Naive thymus-derived CD4-positive, alpha-beta T cell (primary cell): ENCODE measurements at regions of chr22 and their contacts with region 1.

Region 1: GRCh38 chr22:41381329-41382097 is at the start of gene TEF:
- DNase-seq: peak; percentile 97 to 99 (median 98)
- ATAC-seq: peak; percentile 89
- H3K4me3 ChIP-seq: peak within 1 kb of the TSS; percentile 86
- H3K4me3 Mint-ChIP-seq: peak within 1 kb of the TSS; percentile 90 to 97 (median 94)
- H3K27ac ChIP-seq: peak within 1 kb of the TSS; percentile 95
- H3K27ac Mint-ChIP-seq: peak within 1 kb of the TSS; percentile 94 to 99 (median 98)
- H3K4me1 ChIP-seq: peaks cover 5 to 14% of the 10 kb centered on the region in 2 donors
- H3K4me1 Mint-ChIP-seq: peaks cover 5 to 29% (median 19%) of the 10 kb centered on the region in 7 donors
- H3K27me3 ChIP-seq: no peaks in the 10 kb centered on the region
- H3K27me3 Mint-ChIP-seq: peaks cover 0 to 5% (median 0%) of the 10 kb centered on the region in 5 donors
- total RNA-seq, gene TEF: 3.8 to 8.4 (median 6.2) TPM

Region 2: GRCh38 chr22:40950962-40951794 is 430.3 kb before region 1 on chr22 and contains the start of gene RBX1:
- CTCF ChIA-PET with region 1: no interaction called
- POLR2A ChIA-PET with region 1: interaction called, 8 read pairs
- intact Hi-C with region 1: loop called (anchors 1 kb)
- DNase-seq: peak; percentile 96 to 100 (median 99)
- ATAC-seq: peak; percentile 92
- H3K4me3 ChIP-seq: peak within 1 kb of the TSS; percentile 98
- H3K4me3 Mint-ChIP-seq: peak within 1 kb of the TSS; percentile 91 to 99 (median 98)
- H3K27ac ChIP-seq: peak within 1 kb of the TSS; percentile 99
- H3K27ac Mint-ChIP-seq: peak within 1 kb of the TSS; percentile 96 to 100 (median 99)
- H3K4me1 ChIP-seq: peaks cover 16 to 19% of the 10 kb centered on the region in 2 donors
- H3K4me1 Mint-ChIP-seq: peaks cover 20 to 43% (median 39%) of the 10 kb centered on the region in 7 donors
- H3K27me3 ChIP-seq: no peaks in the 10 kb centered on the region
- H3K27me3 Mint-ChIP-seq: no peaks in the 10 kb centered on the region
- total RNA-seq, gene RBX1: 28.9 to 91.3 (median 32.7) TPM

Region 3: DNA sequence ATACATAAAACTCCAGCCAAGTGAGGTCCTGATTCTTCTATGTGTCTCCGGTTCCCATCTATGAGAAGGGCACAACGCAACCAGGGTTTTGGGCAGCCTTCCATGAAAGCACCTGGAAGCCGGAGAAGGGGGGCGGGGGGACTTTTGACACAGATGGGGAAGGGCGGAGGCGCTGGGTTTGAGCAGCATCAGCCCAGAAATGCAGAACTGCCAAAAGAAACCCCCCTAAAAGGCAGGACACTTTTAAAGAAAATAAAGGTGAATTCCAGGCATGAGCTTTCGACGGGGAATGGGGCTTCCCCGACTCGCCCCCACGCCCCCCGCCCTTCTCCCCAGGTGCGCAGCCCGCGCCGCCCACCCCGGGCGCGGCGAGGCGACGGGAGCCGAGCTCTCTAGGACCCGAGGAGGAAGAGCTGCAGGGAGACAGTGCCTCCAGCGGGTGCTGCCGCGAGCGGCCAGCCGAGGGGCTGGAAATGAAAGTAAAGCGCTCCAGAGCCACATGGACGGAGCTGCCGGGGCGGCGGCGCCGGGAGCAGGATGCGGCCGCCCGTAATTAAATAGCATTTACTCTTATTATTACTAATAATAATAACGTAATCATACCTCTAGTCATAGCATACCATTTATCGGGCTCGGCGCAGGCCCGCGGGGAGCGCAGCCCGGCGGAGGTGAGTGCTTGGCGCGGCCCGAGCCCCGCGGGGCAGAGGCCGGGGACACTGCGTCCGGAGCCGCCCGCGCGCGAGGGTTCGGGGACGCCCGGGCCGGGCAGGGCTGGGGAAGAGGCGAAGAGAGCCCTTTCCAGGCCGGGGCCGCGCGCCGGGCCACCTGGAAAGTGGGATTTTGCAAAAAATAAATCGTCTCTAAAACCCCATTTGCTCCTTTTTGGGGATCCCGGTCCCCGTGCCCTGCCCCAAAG is 80.2 kb before region 1 on chr22 and contains the start of gene ZC3H7B:
- CTCF ChIA-PET with region 1: interaction called, 3 read pairs
- POLR2A ChIA-PET with region 1: interaction called, 14 read pairs
- intact Hi-C with region 1: loop called (anchors 1 to 2 kb)
- DNase-seq: peak; percentile 73 to 89 (median 83)
- ATAC-seq: peak; percentile 98
- H3K4me3 ChIP-seq: peak within 1 kb of the TSS; percentile 22
- H3K4me3 Mint-ChIP-seq: peak within 1 kb of the TSS; percentile 67 to 91 (median 85)
- H3K27ac ChIP-seq: peak within 1 kb of the TSS; percentile 82
- H3K27ac Mint-ChIP-seq: peak within 1 kb of the TSS; percentile 72 to 96 (median 87)
- H3K4me1 ChIP-seq: peaks cover 13 to 15% of the 10 kb centered on the region in 2 donors
- H3K4me1 Mint-ChIP-seq: peaks cover 19 to 35% (median 32%) of the 10 kb centered on the region in 7 donors
- H3K27me3 ChIP-seq: no peaks in the 10 kb centered on the region
- H3K27me3 Mint-ChIP-seq: no peaks in the 10 kb centered on the region
- total RNA-seq, gene ZC3H7B: 36.9 to 65.9 (median 42.7) TPM

Region 4: GRCh38 chr22:41468381-41469217 is 87.1 kb after region 1 on chr22 and contains the starts of genes ACO2 and PHF5A:
- CTCF ChIA-PET with region 1: no interaction called
- POLR2A ChIA-PET with region 1: interaction called, 24 read pairs
- intact Hi-C with region 1: loop called (anchors 1 kb)
- DNase-seq: peak; percentile 93 to 99 (median 98)
- ATAC-seq: peak; percentile 96
- H3K4me3 ChIP-seq: peak within 1 kb of the TSS; percentile 76
- H3K4me3 Mint-ChIP-seq: peak within 1 kb of the TSS; percentile 88 to 94 (median 91)
- H3K27ac ChIP-seq: peak within 1 kb of the TSS; percentile 89
- H3K27ac Mint-ChIP-seq: peak within 1 kb of the TSS; percentile 98 to 100 (median 99)
- H3K4me1 ChIP-seq: peaks cover 19 to 20% of the 10 kb centered on the region in 2 donors
- H3K4me1 Mint-ChIP-seq: peaks cover 18 to 75% (median 59%) of the 10 kb centered on the region in 7 donors
- H3K27me3 ChIP-seq: no peaks in the 10 kb centered on the region
- H3K27me3 Mint-ChIP-seq: no peaks in the 10 kb centered on the region
- total RNA-seq, gene ACO2: 64.5 to 84.8 (median 70.3) TPM
- total RNA-seq, gene PHF5A: 27.8 to 63.9 (median 36.0) TPM

Region 5: GRCh38 chr22:41543854-41544670 is 162.5 kb after region 1 on chr22 and contains the start of gene POLR3H:
- CTCF ChIA-PET with region 1: no interaction called
- POLR2A ChIA-PET with region 1: interaction called, 10 read pairs
- intact Hi-C with region 1: loop called in 1 of 2 experiments (anchors 1 kb)
- DNase-seq: peak; percentile 89 to 97 (median 95)
- ATAC-seq: peak; percentile 100
- H3K4me3 ChIP-seq: peak within 1 kb of the TSS; percentile 96
- H3K4me3 Mint-ChIP-seq: peak within 1 kb of the TSS; percentile 82 to 100 (median 97)
- H3K27ac ChIP-seq: peak within 1 kb of the TSS; percentile 84
- H3K27ac Mint-ChIP-seq: peak within 1 kb of the TSS; percentile 88 to 98 (median 95)
- H3K4me1 ChIP-seq: peaks cover 7 to 15% of the 10 kb centered on the region in 2 donors
- H3K4me1 Mint-ChIP-seq: peaks cover 30 to 52% (median 45%) of the 10 kb centered on the region in 7 donors
- H3K27me3 ChIP-seq: no peaks in the 10 kb centered on the region
- H3K27me3 Mint-ChIP-seq: no peaks in the 10 kb centered on the region
- total RNA-seq, gene POLR3H: 21.7 to 59.6 (median 28.5) TPM

Region 6: DNA sequence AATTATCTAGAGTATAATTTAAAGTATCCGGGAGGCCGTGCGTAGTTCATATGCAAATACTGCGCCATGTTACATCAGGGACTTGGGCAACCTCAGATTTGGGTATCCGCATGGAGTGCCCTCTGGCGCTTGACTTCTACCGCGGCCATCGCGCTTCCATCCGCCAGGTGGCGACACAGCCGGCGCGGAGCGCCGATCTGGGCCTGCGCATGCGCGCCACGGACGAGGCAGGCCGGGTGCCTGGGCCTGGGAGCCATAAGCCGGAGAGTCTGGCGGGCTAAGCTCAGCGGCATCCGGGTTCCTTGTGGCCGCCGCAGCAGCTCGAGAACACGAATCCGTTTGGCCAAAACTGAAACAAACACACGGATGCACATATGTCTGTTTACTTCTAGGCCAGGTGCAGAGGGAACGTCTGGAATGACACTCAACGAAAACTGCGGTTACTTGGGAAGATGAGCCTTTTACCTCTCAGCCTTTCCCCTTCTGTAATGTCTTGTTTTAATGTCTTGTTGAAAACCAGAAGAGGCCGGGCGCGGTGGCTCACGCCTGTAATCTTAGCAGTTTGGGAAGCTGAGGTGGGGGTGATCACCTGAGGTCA is 285.2 kb after region 1 on chr22:
- CTCF ChIA-PET with region 1: no interaction called
- POLR2A ChIA-PET with region 1: no interaction called
- intact Hi-C with region 1: loop called in 1 of 2 experiments (anchors 1 kb)
- DNase-seq: peak; percentile 88 to 97 (median 95)
- ATAC-seq: peak; percentile 98
- H3K4me3 ChIP-seq: peak overlapping the region; percentile 44
- H3K4me3 Mint-ChIP-seq: peak overlapping the region; percentile 75 to 87 (median 82)
- H3K27ac ChIP-seq: peak overlapping the region; percentile 72
- H3K27ac Mint-ChIP-seq: peak overlapping the region; percentile 91 to 99 (median 97)
- H3K4me1 ChIP-seq: peaks cover 7% of the 10 kb centered on the region in 2 donors
- H3K4me1 Mint-ChIP-seq: peaks cover 0 to 25% (median 10%) of the 10 kb centered on the region in 7 donors
- H3K27me3 ChIP-seq: no peaks in the 10 kb centered on the region
- H3K27me3 Mint-ChIP-seq: no peaks in the 10 kb centered on the region